ENCODE measurements at regions of chr2 and their contacts with region 1.

Region 1: GRCh38 chr2:27428213-27428977 is at the start of gene NRBP1:
- DNase-seq: peak; percentile 93 to 98 (median 95)
- ATAC-seq: peak; percentile 94
- H3K4me3 ChIP-seq: peak within 1 kb of the TSS; percentile 96
- H3K27ac ChIP-seq: peak within 1 kb of the TSS; percentile 91
- H3K4me1 ChIP-seq: peaks cover 18% of the 10 kb centered on the region in 2 experiments; a peak in 4 of 5 replicates
- H3K27me3 ChIP-seq: no peaks in the 10 kb centered on the region
- CTCF ChIP-seq: peak in 1 of 3 experiments; percentile 27; a peak in 1 of 6 replicates
- EP300 ChIP-seq: no peak
- POLR2A ChIP-seq: peak; percentile 91
- RAD21 ChIP-seq: no peak
- polyA plus RNA-seq, gene NRBP1: 2.9 to 7.8 TPM

Region 2: DNA sequence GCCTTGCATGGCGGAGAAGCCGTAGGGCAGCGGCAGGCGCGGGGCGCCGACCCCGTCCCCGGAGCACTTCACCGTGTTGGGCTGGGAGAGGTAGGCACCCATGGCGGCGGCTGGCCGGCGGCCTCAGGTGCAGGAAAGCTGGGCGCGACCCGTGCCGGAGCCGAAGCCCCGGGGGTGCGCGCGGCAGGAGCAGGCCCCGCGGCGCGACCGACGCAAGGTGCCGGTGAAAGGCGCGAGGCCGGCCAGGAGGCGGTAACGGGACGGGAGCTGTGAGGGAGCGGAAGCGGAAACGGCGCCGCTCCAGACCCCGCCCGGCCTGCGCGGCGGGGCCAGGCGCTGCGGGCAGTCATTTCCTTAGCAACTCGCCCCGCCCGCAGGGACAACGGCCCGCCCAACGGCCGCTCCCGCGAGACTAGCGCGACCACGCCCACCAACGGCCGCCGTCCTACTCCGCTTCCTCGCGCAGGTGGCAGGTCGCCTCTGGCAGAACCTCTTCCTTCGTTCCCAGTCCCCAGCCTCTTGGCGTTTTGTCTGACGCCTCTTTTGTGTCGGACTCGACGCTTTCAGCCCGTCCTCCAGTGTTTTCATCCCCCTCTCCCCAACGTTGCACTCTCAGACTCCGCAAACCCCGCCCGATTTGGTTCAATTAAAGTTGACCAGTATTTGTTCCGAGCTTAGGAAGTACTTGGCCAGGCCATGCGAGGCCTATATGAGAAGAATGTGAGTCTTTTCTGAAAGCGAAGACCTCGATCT is 18.9 kb before region 1 on chr2 and contains the start of gene PPM1G:
- CTCF ChIA-PET with region 1: interaction called, 3 read pairs
- POLR2A ChIA-PET with region 1: interaction called, 46 read pairs
- in situ Hi-C with region 1: no loop called
- intact Hi-C with region 1: loop called (anchors 1 kb)
- DNase-seq: peak; percentile 93 to 97 (median 94)
- ATAC-seq: peak; percentile 98
- H3K4me3 ChIP-seq: peak within 1 kb of the TSS; percentile 99
- H3K27ac ChIP-seq: peak within 1 kb of the TSS; percentile 93
- H3K4me1 ChIP-seq: peaks cover 6 to 26% of the 10 kb centered on the region in 2 experiments; a peak in 4 of 5 replicates
- H3K27me3 ChIP-seq: no peaks in the 10 kb centered on the region
- CTCF ChIP-seq: 0 out of 6 replicates have a peak, but pooled peaks of 1 of the 3 experiments have one; percentile 7
- EP300 ChIP-seq: peak; percentile 40
- POLR2A ChIP-seq: peak; percentile 95
- RAD21 ChIP-seq: no peak
- polyA plus RNA-seq, gene PPM1G: 61.7 to 88.8 TPM

Region 3: DNA sequence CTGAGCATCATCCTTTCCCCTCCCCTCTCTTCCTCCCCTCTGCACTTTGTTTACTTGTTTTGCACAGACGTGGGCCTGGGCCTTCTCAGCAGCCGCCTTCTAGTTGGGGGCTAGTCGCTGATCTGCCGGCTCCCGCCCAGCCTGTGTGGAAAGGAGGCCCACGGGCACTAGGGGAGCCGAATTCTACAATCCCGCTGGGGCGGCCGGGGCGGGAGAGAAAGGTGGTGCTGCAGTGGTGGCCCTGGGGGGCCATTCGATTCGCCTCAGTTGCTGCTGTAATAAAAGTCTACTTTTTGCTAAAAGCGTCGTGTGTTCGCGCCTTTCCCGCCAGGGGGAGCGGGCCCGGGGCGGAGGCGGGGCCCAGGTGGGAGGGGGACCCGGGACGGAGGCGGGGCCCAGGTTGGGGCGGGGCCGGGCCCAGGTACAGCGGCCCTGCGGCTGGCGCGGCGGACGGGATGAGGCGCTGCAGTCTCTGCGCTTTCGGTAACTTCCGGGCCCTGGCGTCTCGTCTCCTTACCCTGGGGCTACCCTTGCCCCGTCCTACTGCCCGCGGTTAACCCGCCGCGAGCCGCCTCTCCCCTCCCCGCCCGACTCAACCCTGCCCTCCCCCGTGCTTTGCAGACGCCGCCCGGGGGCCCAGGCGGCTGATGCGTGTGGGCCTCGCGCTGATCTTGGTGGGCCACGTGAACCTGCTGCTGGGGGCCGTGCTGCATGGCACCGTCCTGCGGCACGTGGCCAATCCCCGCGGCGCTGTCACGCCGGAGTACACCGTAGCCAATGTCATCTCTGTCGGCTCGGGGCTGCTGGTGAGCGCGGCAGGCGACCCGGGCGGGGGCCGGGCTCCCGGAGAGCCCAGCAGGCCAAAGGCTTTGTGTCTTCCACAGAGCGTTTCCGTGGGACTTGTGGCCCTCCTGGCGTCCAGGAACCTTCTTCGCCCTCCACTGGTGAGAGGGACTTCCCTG is 13.8 kb after region 1 on chr2 and contains the start of gene KRTCAP3:
- CTCF ChIA-PET with region 1: no interaction called
- POLR2A ChIA-PET with region 1: interaction called, 58 read pairs
- in situ Hi-C with region 1: no loop called
- intact Hi-C with region 1: no loop called
- DNase-seq: peak in 3 of 4 experiments; percentile 41 to 78 (median 73)
- ATAC-seq: peak; percentile 36
- H3K4me3 ChIP-seq: no peak within 1 kb of the TSS
- H3K27ac ChIP-seq: peak within 1 kb of the TSS; percentile 68
- H3K4me1 ChIP-seq: peaks cover 12 to 24% of the 10 kb centered on the region in 2 experiments; a peak in 4 of 5 replicates
- H3K27me3 ChIP-seq: no peaks in the 10 kb centered on the region
- CTCF ChIP-seq: no peak
- EP300 ChIP-seq: no peak
- POLR2A ChIP-seq: no peak; the same call in 1 of the 2 replicates
- RAD21 ChIP-seq: no peak
- polyA plus RNA-seq, gene KRTCAP3: 0.24 to 0.27 TPM

Region 4: DNA sequence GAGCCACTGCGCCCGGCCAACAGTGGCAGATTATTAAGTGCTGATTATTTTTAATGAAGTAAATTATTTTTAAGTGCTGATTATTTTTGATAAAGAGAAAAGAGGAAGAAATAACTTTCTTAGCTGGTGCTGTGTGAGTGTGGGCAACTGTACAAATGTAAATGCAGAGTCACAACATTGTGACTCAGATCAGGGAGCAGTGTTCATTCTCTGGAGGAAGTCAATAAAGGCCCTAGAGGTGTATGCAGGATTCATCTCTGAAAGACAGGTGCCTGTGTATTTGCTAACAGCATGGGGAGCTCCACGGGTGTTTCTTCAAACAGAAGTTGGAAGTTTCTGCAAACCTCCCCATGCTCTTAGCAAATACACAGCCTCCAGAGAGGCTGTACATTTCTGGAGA is 20.0 kb after region 1 on chr2:
- CTCF ChIA-PET with region 1: no interaction called
- POLR2A ChIA-PET with region 1: interaction called, 17 read pairs
- in situ Hi-C with region 1: no loop called
- intact Hi-C with region 1: no loop called
- DNase-seq: no peak
- ATAC-seq: no peak
- H3K4me3 ChIP-seq: no peak overlapping the region
- H3K27ac ChIP-seq: no peak overlapping the region
- H3K4me1 ChIP-seq: no peaks in the 10 kb centered on the region; a peak in 1 of 5 replicates
- H3K27me3 ChIP-seq: no peaks in the 10 kb centered on the region
- CTCF ChIP-seq: no peak
- EP300 ChIP-seq: no peak
- POLR2A ChIP-seq: no peak
- RAD21 ChIP-seq: no peak

Region 5: GRCh38 chr2:27489498-27490397 is 61.4 kb after region 1 on chr2 and contains the start of gene IFT172:
- CTCF ChIA-PET with region 1: no interaction called
- POLR2A ChIA-PET with region 1: no interaction called
- in situ Hi-C with region 1: no loop called
- intact Hi-C with region 1: loop called (anchors 5 kb)
- DNase-seq: peak; percentile 99 to 100 (median 99)
- ATAC-seq: peak; percentile 98
- H3K4me3 ChIP-seq: peak within 1 kb of the TSS; percentile 52
- H3K27ac ChIP-seq: peak within 1 kb of the TSS; percentile 73
- H3K4me1 ChIP-seq: peaks cover 6 to 10% of the 10 kb centered on the region in 2 experiments; a peak in 4 of 5 replicates
- H3K27me3 ChIP-seq: no peaks in the 10 kb centered on the region
- CTCF ChIP-seq: peak in 1 of 3 experiments; percentile 9; a peak in 1 of 6 replicates
- EP300 ChIP-seq: 0 out of 2 replicates have a peak, but pooled peaks have one; percentile 20
- POLR2A ChIP-seq: peak; percentile 86
- RAD21 ChIP-seq: peak in 1 of 2 experiments; percentile 30; a peak in 2 of 4 replicates
- polyA plus RNA-seq, gene IFT172: 5.6 to 7.3 TPM